Tibial artery (tissue), 4 donors: ENCODE measurements at regions of chr15 and their contacts with region 1.

Region 1: GRCh38 chr15:92268906-92269305 is 124.8 kb upstream of the ST8SIA2 start:
- DNase-seq: no peak
- H3K4me3 ChIP-seq: no peak overlapping the region
- H3K27ac ChIP-seq: no peak overlapping the region
- H3K4me1 ChIP-seq: no peaks in the 10 kb centered on the region
- H3K27me3 ChIP-seq: no peaks in the 10 kb centered on the region
- CTCF ChIP-seq: no peak

Region 2: DNA sequence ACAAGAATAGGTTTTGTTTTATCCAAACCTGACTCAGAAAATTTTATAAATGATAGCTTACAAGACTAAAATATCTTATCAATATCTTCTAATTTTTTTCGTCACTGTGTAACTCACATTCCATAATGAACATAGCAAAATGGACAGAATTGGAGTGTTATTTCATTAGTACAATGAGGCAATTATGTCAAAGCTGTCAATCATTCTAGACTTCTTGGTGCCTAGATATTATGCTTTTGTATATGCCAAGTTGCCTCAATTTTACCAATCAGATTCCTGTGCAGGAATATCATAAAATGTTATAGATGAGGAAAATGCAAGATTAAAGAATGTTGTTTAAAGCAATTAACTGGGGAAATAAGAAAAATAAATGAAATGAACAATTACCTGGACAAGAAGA is 51.0 kb before region 1 on chr15:
- intact Hi-C with region 1: loop called (anchors 10 kb)
- DNase-seq: no peak
- H3K4me3 ChIP-seq: no peak overlapping the region
- H3K27ac ChIP-seq: no peak overlapping the region
- H3K4me1 ChIP-seq: no peaks in the 10 kb centered on the region
- H3K27me3 ChIP-seq: no peaks in the 10 kb centered on the region
- CTCF ChIP-seq: no peak

Region 3: GRCh38 chr15:92322566-92323355 is 53.9 kb after region 1 on chr15:
- intact Hi-C with region 1: loop called (anchors 10 kb)
- DNase-seq: no peak
- H3K4me3 ChIP-seq: no peak overlapping the region
- H3K27ac ChIP-seq: no peak overlapping the region
- H3K4me1 ChIP-seq: peaks cover 0 to 4% (median 0%) of the 10 kb centered on the region in 4 donors
- H3K27me3 ChIP-seq: no peaks in the 10 kb centered on the region
- CTCF ChIP-seq: no peak

Region 4: DNA sequence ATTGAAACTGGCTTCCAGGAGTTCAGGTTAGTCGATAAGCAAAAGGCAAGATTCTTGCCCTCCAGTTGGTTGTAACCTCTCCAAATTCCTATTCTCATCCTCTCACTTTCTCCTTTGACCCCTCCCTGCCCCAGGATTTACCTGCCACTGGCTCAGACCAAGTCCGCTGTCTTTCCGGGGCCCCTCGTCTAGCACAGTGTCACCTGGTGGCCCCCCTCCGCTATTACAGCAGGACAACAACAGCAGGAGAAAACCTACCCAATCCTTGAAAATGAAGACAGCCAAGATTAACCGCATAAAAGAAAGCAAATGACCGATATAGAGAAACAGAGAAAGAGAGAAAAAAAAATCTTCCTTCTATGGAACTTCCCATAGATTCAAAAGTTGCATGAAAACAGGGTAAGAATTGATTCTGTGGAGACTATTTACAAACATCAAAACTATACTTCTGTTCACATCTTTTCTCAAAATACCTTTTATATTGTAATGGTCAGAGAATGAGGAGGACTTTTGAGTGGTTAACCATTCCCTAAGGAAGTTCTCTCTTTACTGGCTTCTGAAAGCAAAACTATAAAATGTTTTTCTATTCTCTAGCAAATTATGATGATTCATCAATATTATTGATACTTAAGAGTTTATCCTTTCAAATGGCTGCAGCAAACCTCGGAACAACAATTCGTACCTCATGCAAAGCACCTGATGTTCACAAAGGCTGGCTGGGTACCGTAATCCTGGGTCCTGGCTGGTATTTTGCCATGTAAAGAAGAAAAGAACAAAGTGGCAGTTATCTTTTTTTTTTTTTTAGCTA is 114.8 kb after region 1 on chr15:
- intact Hi-C with region 1: no loop called
- DNase-seq: no peak
- H3K4me3 ChIP-seq: no peak overlapping the region
- H3K27ac ChIP-seq: no peak overlapping the region
- H3K4me1 ChIP-seq: no peaks in the 10 kb centered on the region
- H3K27me3 ChIP-seq: peaks cover 0 to 7% of the 10 kb centered on the region in 2 donors
- CTCF ChIP-seq: no peak